Activated CD4-positive, alpha-beta T cell treated with anti-CD3 and anti-CD28 coated beads for 36 hours (primary cell): ENCODE measurements at regions of chr20 and their contacts with region 1.

Region 1: GRCh38 chr20:41339507-41340326 is 904 bp upstream of the LPIN3 start:
- DNase-seq: peak; percentile 92
- ATAC-seq: peak; percentile 76
- H3K4me3 Mint-ChIP-seq: peak overlapping the region; percentile 68
- H3K27ac Mint-ChIP-seq: peak overlapping the region; percentile 27
- H3K4me1 Mint-ChIP-seq: peaks cover 7% of the 10 kb centered on the region
- H3K27me3 Mint-ChIP-seq: peaks cover 2% of the 10 kb centered on the region

Region 2: GRCh38 chr20:40970201-40970600 is 369.5 kb before region 1 on chr20:
- CTCF ChIA-PET with region 1: interaction called, 4 read pairs
- POLR2A ChIA-PET with region 1: no interaction called
- intact Hi-C with region 1: loop called (anchors 1 kb)
- DNase-seq: no peak
- ATAC-seq: no peak
- H3K4me3 Mint-ChIP-seq: no peak overlapping the region
- H3K27ac Mint-ChIP-seq: no peak overlapping the region
- H3K4me1 Mint-ChIP-seq: peaks cover 9% of the 10 kb centered on the region
- H3K27me3 Mint-ChIP-seq: peaks cover 6% of the 10 kb centered on the region

Region 3: GRCh38 chr20:41047975-41048305 is 291.8 kb before region 1 on chr20:
- CTCF ChIA-PET with region 1: no interaction called
- POLR2A ChIA-PET with region 1: no interaction called
- intact Hi-C with region 1: loop called in 1 of 2 experiments (anchors 1 kb)
- DNase-seq: no peak
- ATAC-seq: peak; percentile 46
- H3K4me3 Mint-ChIP-seq: peak overlapping the region; percentile 72
- H3K27ac Mint-ChIP-seq: peak overlapping the region; percentile 87
- H3K4me1 Mint-ChIP-seq: peaks cover 89% of the 10 kb centered on the region
- H3K27me3 Mint-ChIP-seq: no peaks in the 10 kb centered on the region

Region 4: GRCh38 chr20:41232973-41233926 is 106.5 kb before region 1 on chr20:
- CTCF ChIA-PET with region 1: interaction called, 5 read pairs
- POLR2A ChIA-PET with region 1: no interaction called
- intact Hi-C with region 1: loop called (anchors 1 to 5 kb)
- DNase-seq: no peak
- ATAC-seq: no peak
- H3K4me3 Mint-ChIP-seq: no peak overlapping the region
- H3K27ac Mint-ChIP-seq: peak overlapping the region; percentile 1
- H3K4me1 Mint-ChIP-seq: peaks cover 18% of the 10 kb centered on the region
- H3K27me3 Mint-ChIP-seq: no peaks in the 10 kb centered on the region

Region 5: GRCh38 chr20:41329435-41330342 is 10.0 kb before region 1 on chr20:
- CTCF ChIA-PET with region 1: interaction called, 12 read pairs
- POLR2A ChIA-PET with region 1: interaction called, 5 read pairs
- intact Hi-C with region 1: no loop called
- DNase-seq: peak; percentile 83
- ATAC-seq: peak; percentile 100
- H3K4me3 Mint-ChIP-seq: no peak overlapping the region
- H3K27ac Mint-ChIP-seq: peak overlapping the region; percentile 10
- H3K4me1 Mint-ChIP-seq: peaks cover 13% of the 10 kb centered on the region
- H3K27me3 Mint-ChIP-seq: no peaks in the 10 kb centered on the region

Region 6: DNA sequence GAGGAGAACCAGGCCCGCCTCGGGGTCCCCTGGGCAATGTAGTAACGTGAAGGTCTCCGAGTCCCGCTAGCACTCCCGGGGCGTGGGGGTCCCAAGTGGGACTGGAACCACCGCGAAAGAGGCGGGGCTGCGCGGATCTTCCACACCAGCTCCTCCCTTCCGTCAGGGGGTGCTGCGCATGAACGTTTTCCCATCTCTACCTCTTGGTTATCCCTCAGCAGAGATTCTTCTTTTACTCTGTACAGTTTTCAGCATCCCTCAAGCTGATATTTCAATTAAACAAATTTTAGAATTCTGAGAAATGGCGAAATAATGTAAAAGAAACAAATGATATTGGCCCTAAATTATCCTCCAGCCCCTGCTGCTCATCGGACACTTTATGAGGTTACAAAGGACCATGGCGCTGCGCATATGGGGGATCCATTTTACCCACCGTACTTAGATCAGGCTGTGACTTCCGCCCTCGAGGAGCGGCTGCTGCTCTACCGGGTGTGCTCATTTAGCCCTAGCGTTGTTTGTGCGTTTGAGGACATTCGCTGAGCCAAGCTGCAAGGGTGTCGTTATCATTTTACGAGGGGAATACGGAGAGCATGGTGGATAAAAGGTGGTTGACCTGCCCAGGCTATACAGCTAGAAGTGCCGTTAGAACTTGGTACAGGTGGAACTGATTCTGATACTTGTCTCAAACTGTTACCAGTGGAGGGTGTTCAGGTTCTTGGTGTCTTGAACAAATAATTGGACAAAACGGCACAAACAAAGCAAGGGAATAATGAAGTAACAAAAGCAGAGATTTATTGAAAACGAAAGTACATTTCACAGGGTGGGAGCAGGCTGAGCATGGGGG is 353.6 kb after region 1 on chr20:
- CTCF ChIA-PET with region 1: no interaction called
- POLR2A ChIA-PET with region 1: no interaction called
- intact Hi-C with region 1: loop called in 1 of 2 experiments (anchors 1 kb)
- DNase-seq: peak; percentile 88
- ATAC-seq: peak; percentile 90
- H3K4me3 Mint-ChIP-seq: peak overlapping the region; percentile 90
- H3K27ac Mint-ChIP-seq: peak overlapping the region; percentile 94
- H3K4me1 Mint-ChIP-seq: peaks cover 13% of the 10 kb centered on the region
- H3K27me3 Mint-ChIP-seq: peaks cover 2% of the 10 kb centered on the region